A673 (cell line): ENCODE measurements at regions of chr18 and their contacts with region 1.

Region 1: GRCh38 chr18:42114310-42114943 is 159.4 kb downstream of the PIK3C3 start:
- DNase-seq: peak; percentile 92
- H3K4me3 ChIP-seq: no peak overlapping the region
- H3K27ac ChIP-seq: peak overlapping the region; percentile 91
- H3K4me1 ChIP-seq: peaks cover 26% of the 10 kb centered on the region
- H3K27me3 ChIP-seq: no peaks in the 10 kb centered on the region
- CTCF ChIP-seq: peak; percentile 88

Region 2: DNA sequence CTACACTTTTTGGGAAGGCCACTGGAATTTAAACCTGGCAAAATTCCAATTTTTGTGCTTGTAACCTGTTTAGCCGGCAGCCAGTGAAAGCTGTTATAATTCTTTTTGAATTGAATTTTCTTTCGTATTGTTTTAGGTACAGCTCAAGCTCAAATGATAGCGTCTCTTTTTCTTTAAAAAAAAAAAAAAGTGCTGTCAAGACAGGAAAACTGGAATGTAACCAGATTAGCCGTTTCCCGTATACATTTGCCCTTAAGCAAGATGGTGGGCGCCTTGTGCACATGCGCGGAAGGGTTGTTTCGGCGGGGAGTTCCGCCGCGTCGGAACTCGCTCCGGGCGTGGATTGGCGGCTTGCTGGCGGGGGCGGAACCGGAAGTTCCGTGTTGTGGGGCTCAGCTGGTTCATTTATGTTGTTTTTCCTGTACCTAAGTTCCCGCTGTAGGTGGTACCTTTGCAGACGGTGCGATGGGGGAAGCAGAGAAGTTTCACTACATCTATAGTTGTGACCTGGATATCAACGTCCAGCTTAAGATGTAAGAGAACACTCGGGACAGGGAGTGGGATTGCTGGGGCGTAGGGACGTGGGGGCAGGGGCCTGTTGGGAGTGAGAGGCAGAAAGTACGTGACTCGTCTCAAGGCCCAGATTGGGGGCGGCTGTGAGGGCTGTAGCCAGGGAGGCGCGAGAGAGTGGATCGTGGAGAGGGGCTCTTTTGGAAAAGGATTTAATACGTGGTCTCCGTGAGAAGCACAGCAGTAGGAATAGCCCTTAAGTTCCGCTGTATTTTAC is 159.4 kb before region 1 on chr18 and contains the start of gene PIK3C3:
- CTCF ChIA-PET with region 1: no interaction called
- POLR2A ChIA-PET with region 1: no interaction called
- intact Hi-C with region 1: no loop called
- DNase-seq: peak; percentile 98
- H3K4me3 ChIP-seq: peak within 1 kb of the TSS; percentile 76
- H3K27ac ChIP-seq: peak within 1 kb of the TSS; percentile 62
- H3K4me1 ChIP-seq: peaks cover 4% of the 10 kb centered on the region
- H3K27me3 ChIP-seq: no peaks in the 10 kb centered on the region
- CTCF ChIP-seq: no peak
- total RNA-seq, gene PIK3C3: 49.6 and 50.8 TPM in 2 replicates

Region 3: DNA sequence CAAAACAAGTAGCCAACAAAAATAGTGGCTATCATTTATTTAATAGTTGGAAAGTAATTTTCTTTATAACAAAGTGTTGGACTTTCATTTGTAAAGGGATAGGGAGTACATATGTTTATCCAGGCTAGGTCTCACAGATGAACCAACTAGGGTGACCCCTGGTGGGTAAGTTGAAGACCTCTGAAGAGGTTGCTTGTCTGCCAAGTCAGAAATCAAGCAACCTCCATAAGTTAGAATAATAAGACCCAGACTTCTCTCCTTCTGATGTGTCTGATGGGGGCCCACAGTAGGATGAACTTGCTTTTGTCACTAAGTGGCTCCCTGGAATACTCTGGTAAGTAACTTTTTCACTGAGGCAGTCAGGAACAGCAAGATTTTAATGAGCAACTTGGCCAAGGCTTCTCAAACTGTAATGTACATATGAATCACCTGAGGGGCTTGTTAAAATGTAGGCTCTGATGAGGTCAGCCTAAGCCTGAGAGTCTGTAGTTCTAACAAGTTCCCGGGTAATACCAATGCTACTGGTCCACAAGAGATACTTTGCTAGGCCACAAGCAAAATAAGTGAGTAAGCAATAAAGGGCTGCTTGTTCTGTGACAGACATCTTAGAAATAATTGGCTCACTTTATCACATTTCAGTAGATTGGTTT is 160.2 kb after region 1 on chr18:
- CTCF ChIA-PET with region 1: interaction called, 10 read pairs
- POLR2A ChIA-PET with region 1: interaction called, 5 read pairs
- intact Hi-C with region 1: loop called (anchors 1 kb)
- DNase-seq: peak; percentile 74
- H3K4me3 ChIP-seq: no peak overlapping the region
- H3K27ac ChIP-seq: peak overlapping the region; percentile 93
- H3K4me1 ChIP-seq: peaks cover 47% of the 10 kb centered on the region
- H3K27me3 ChIP-seq: no peaks in the 10 kb centered on the region
- CTCF ChIP-seq: peak; percentile 57

Region 4: DNA sequence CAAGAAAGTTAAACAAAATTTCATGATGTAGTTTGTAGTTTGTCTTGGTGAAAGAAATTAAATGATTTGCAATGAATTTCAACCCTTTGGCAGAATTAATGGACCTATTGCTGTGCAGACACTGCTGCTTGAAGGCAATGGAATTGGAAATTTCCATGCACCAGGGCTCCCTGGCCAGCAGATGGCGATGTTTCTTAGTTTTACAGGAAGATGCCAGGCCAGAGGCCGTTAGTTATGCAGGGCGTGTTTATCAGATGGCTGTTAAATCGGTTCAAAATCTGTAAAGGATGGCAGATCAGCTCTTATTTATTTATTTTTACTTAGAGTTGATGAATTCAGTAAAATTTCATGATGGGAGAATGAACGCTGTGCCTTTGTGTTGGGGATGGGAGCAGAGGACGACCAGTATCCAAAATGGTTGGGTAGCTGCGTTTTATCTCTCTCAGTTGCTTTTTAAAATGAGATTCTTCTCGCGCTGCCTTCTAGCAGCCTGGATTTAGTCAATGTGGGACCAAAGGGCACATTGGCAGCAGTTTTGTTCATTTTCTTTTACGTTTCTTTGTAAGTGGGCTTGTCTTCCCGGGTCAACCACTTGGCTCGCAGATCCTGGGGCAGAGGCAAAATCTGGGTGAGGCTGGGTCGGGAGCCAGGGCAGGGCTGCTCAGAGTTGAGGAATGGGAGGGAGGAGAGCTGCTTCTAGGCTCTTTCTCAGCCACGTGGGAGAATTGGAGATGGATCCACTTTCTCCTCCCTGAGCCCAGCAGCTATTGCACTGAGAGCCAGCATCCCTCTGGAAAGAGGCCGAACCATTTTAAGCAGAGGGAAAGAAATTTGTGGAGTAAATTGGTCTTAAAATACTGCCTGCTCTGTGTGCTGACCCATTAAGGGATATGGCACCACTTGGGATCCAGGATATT is 184.6 kb after region 1 on chr18:
- CTCF ChIA-PET with region 1: interaction called, 6 read pairs
- POLR2A ChIA-PET with region 1: no interaction called
- intact Hi-C with region 1: loop called (anchors 1 kb)
- DNase-seq: peak; percentile 87
- H3K4me3 ChIP-seq: no peak overlapping the region
- H3K27ac ChIP-seq: no peak overlapping the region
- H3K4me1 ChIP-seq: peaks cover 4% of the 10 kb centered on the region
- H3K27me3 ChIP-seq: no peaks in the 10 kb centered on the region
- CTCF ChIP-seq: peak; percentile 93

Region 5: GRCh38 chr18:43277164-43277600 is 1162.8 kb after region 1 on chr18 and contains the start of gene SYT4:
- CTCF ChIA-PET with region 1: interaction called, 4 read pairs
- POLR2A ChIA-PET with region 1: no interaction called
- intact Hi-C with region 1: loop called (anchors 5 kb)
- DNase-seq: peak; percentile 72
- H3K4me3 ChIP-seq: no peak within 1 kb of the TSS
- H3K27ac ChIP-seq: no peak within 1 kb of the TSS
- H3K4me1 ChIP-seq: no peaks in the 10 kb centered on the region
- H3K27me3 ChIP-seq: no peaks in the 10 kb centered on the region
- CTCF ChIP-seq: no peak
- total RNA-seq, gene SYT4: 2.3 TPM in 2 replicates

Region 6: DNA sequence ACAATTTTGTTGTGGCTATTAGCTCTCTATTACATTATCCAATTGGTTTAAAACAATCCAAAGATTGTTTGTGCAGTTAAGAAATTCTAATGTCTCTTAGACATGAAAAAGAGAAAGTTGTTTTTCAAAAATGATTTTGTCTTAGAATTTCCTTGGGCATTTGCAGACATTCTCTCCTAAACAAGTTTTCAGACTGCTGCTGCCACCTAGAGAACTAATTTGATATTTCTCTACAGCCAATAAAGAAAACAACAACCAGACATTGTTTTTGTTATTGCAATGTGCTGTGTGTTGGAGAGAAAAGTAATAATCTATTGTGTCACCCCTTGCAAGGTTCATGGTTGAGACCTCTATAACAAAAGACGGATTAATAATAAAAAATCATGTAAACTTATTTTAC is 1281.8 kb after region 1 on chr18:
- CTCF ChIA-PET with region 1: no interaction called
- POLR2A ChIA-PET with region 1: no interaction called
- intact Hi-C with region 1: loop called (anchors 2 kb)
- DNase-seq: peak; percentile 45
- H3K4me3 ChIP-seq: no peak overlapping the region
- H3K27ac ChIP-seq: no peak overlapping the region
- H3K4me1 ChIP-seq: no peaks in the 10 kb centered on the region
- H3K27me3 ChIP-seq: no peaks in the 10 kb centered on the region
- CTCF ChIP-seq: peak; percentile 67

Region 7: DNA sequence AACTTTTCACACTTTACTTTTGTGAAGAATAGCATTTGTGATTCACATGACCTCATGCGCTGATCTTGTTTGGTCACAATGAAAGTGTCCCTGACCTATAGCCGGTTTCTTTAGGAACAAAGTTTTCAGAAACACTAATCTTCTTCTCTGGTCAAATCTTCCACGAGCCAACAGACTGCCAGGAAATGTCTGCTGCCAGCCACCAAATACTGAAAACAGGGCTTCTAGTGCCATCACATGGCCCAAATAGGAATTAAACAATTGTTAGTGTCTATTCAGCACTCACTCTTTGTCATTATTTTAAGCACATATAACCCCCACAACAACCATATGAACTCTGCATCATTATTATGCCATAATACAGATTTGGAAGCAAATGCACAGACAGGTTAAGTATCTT is 1449.4 kb after region 1 on chr18:
- CTCF ChIA-PET with region 1: no interaction called
- POLR2A ChIA-PET with region 1: no interaction called
- intact Hi-C with region 1: loop called (anchors 5 kb)
- DNase-seq: peak; percentile 67
- H3K4me3 ChIP-seq: no peak overlapping the region
- H3K27ac ChIP-seq: no peak overlapping the region
- H3K4me1 ChIP-seq: no peaks in the 10 kb centered on the region
- H3K27me3 ChIP-seq: no peaks in the 10 kb centered on the region
- CTCF ChIP-seq: peak; percentile 68

Region 8: GRCh38 chr18:43596105-43596712 is 1481.8 kb after region 1 on chr18:
- CTCF ChIA-PET with region 1: interaction called, 3 read pairs
- POLR2A ChIA-PET with region 1: no interaction called
- intact Hi-C with region 1: loop called (anchors 10 kb)
- DNase-seq: peak; percentile 70
- H3K4me3 ChIP-seq: no peak overlapping the region
- H3K27ac ChIP-seq: peak overlapping the region; percentile 82
- H3K4me1 ChIP-seq: peaks cover 36% of the 10 kb centered on the region
- H3K27me3 ChIP-seq: no peaks in the 10 kb centered on the region
- CTCF ChIP-seq: peak; percentile 65